ENCODE measurements at regions of chr12 and their contacts with region 1.

Region 1: GRCh38 chr12:118372541-118373495 is at the start of gene TAOK3:
- DNase-seq: peak; percentile 95
- H3K4me3 Mint-ChIP-seq: peak within 1 kb of the TSS; percentile 89
- H3K27ac Mint-ChIP-seq: peak within 1 kb of the TSS; percentile 89
- H3K4me1 Mint-ChIP-seq: peaks cover 44% of the 10 kb centered on the region
- H3K27me3 Mint-ChIP-seq: peaks cover 15% of the 10 kb centered on the region
- total RNA-seq, gene TAOK3: 52.4 and 57.0 TPM in 2 replicates

Region 2: DNA sequence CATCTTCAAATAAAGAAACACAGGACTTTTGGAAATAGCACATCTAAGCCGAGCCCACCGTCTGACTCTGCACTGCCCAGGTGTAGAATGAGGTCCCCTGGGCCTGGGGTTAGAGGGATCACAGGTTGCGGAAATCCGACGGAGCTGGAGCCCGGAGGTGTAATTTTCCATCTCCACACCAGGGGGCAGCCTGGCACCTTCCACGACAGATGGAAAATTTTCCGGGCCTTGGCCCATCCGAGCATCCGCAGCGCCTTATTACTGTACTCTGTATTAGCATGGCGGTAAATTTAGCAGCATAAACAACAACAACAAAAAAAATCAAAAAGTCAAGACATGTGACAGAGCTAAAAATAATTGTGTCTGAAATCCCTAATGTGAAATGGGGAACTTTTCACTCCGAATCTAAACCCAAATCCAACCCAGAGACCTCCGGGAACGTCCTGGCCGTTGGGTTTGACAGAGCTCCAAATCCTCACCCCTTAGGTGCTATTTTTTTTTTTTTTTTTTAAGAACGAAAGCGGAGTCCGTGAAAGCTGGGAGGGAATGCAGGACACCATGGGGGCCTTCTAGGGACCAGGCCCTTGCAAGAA is 497.9 kb before region 1 on chr12:
- intact Hi-C with region 1: loop called (anchors 5 kb)
- DNase-seq: peak; percentile 48
- H3K4me3 Mint-ChIP-seq: no peak overlapping the region
- H3K27ac Mint-ChIP-seq: no peak overlapping the region
- H3K4me1 Mint-ChIP-seq: peaks cover 4% of the 10 kb centered on the region
- H3K27me3 Mint-ChIP-seq: peaks cover 18% of the 10 kb centered on the region

Region 3: DNA sequence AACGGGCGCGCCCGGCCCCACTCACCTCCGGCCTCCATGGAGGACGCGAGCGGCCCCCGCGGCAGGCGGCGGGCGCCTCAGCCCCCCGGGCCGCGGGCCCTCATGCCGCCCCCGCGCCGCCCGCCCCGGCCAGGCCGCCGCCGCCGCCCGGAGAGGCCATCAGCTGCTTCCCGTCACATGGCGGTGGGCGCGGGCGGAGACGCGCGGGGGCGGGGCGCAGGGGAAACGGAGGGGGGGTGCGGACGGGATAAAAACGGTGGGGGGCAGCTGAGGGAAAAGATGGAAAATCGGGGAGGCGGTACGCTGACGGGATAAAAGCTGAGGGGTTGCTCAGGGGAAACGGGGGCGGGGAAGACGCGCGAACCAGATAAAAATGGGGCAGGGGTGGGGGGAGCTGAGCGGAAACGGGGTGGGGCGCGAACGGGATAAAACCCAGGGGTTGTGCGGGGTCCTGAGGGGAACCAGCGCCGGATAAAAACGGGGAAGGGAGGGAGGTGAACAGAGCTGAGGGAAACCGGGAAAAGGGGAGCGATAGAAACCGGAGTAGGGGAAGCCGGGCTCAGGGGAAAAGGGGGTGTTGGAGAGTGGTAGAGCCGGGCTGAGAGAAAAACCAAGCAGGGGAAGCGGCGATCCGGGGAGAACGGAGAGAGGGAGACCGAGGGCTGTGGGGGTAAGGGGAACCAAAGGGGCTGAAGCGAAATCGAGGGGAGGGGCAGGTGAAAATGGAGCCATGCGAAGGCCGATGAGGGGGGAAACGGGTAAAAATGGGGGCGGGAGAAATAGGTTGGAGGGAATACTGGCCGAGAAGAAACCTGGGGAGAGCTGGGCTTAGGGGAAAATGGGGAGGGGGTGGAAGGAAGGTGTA is 311.6 kb before region 1 on chr12 and contains the start of gene WSB2:
- intact Hi-C with region 1: loop called (anchors 5 kb)
- DNase-seq: peak; percentile 32
- H3K4me3 Mint-ChIP-seq: peak within 1 kb of the TSS; percentile 99
- H3K27ac Mint-ChIP-seq: peak within 1 kb of the TSS; percentile 99
- H3K4me1 Mint-ChIP-seq: peaks cover 50% of the 10 kb centered on the region
- H3K27me3 Mint-ChIP-seq: no peaks in the 10 kb centered on the region
- total RNA-seq, gene WSB2: 84.2 and 89.3 TPM in 2 replicates

Region 4: GRCh38 chr12:118135788-118136558 is 236.8 kb before region 1 on chr12 and contains the start of gene PEBP1:
- intact Hi-C with region 1: loop called (anchors 5 kb)
- DNase-seq: peak; percentile 90
- H3K4me3 Mint-ChIP-seq: peak within 1 kb of the TSS; percentile 99
- H3K27ac Mint-ChIP-seq: peak within 1 kb of the TSS; percentile 89
- H3K4me1 Mint-ChIP-seq: peaks cover 25% of the 10 kb centered on the region
- H3K27me3 Mint-ChIP-seq: no peaks in the 10 kb centered on the region
- total RNA-seq, gene PEBP1: 177 and 184 TPM in 2 replicates

Region 5: GRCh38 chr12:118183705-118184104 is 189.1 kb before region 1 on chr12:
- intact Hi-C with region 1: loop called (anchors 1 kb)
- DNase-seq: no peak
- H3K4me3 Mint-ChIP-seq: no peak overlapping the region
- H3K27ac Mint-ChIP-seq: no peak overlapping the region
- H3K4me1 Mint-ChIP-seq: peaks cover 9% of the 10 kb centered on the region
- H3K27me3 Mint-ChIP-seq: no peaks in the 10 kb centered on the region

Region 6: GRCh38 chr12:118357257-118358007 is 15.4 kb before region 1 on chr12:
- intact Hi-C with region 1: loop called (anchors 1 kb)
- DNase-seq: peak; percentile 33
- H3K4me3 Mint-ChIP-seq: peak overlapping the region; percentile 92
- H3K27ac Mint-ChIP-seq: peak overlapping the region; percentile 92
- H3K4me1 Mint-ChIP-seq: peaks cover 44% of the 10 kb centered on the region
- H3K27me3 Mint-ChIP-seq: no peaks in the 10 kb centered on the region

Measured in activated T-helper 2 cell treated with anti-CD3 and anti-CD28 coated beads, Interferon-gamma antibody, Interleukin-2, Interleukin-4, amounts not matched to agents 10 μg/mL and 5 μg/mL and 100 μg/mL, durations not matched to agents 14 hours and 24 hours and 36 hours (primary cell).